OCI-LY7 (cell line): ENCODE measurements at regions of chr2 and their contacts with region 1.

Region 1: DNA sequence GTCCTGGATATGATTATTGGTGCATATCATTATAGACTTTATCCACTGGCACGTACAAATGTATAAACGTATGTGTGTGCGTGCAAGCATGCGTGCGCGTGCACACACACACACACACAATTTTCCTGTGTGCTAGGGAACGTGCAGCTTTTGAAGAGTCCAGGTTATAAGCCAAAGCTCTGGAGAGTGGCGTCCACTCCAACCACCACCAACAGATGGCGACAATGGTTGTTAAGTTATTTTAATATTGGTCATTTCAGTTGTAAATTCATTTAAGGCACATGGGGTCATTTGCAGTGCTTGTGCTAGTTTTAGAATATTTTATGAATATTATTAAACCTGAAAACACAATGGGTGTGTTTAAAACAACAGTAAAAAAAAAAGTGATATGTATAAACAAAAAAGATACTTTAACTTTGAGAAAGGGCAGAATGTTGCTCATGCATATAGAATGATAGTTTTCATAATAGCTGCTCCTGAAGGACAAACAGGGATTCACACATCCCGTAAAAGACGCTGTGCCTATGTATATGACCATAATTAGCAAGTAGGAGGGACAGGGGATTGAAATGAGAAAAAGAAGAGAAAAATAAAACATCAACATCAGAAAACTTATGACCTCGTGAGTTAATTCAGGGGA is 124.2 kb upstream of the ITGB6 start:
- DNase-seq: peak; percentile 49
- H3K4me3 ChIP-seq: no peak overlapping the region
- H3K27ac ChIP-seq: no peak overlapping the region
- H3K4me1 ChIP-seq: peaks cover 6% of the 10 kb centered on the region
- CTCF ChIP-seq: peak; percentile 88

Region 2: GRCh38 chr2:160429248-160430000 is 105.1 kb after region 1 on chr2:
- CTCF ChIA-PET with region 1: interaction called, 3 read pairs
- POLR2A ChIA-PET with region 1: interaction called, 7 read pairs
- intact Hi-C with region 1: loop called (anchors 5 kb)
- DNase-seq: peak; percentile 79
- H3K4me3 ChIP-seq: no peak overlapping the region
- H3K27ac ChIP-seq: peak overlapping the region; percentile 63
- H3K4me1 ChIP-seq: peaks cover 34% of the 10 kb centered on the region
- CTCF ChIP-seq: peak; percentile 92

Region 3: GRCh38 chr2:160918906-160919503 is 594.7 kb after region 1 on chr2:
- CTCF ChIA-PET with region 1: no interaction called
- POLR2A ChIA-PET with region 1: no interaction called
- intact Hi-C with region 1: loop called (anchors 5 kb)
- DNase-seq: peak; percentile 18
- H3K4me3 ChIP-seq: no peak overlapping the region
- H3K27ac ChIP-seq: no peak overlapping the region
- H3K4me1 ChIP-seq: no peaks in the 10 kb centered on the region
- CTCF ChIP-seq: peak; percentile 63

Region 4: GRCh38 chr2:160970052-160970965 is 646.0 kb after region 1 on chr2:
- CTCF ChIA-PET with region 1: no interaction called
- POLR2A ChIA-PET with region 1: interaction called, 3 read pairs
- intact Hi-C with region 1: loop called (anchors 5 kb)
- DNase-seq: peak; percentile 29
- H3K4me3 ChIP-seq: no peak overlapping the region
- H3K27ac ChIP-seq: no peak overlapping the region
- H3K4me1 ChIP-seq: no peaks in the 10 kb centered on the region
- CTCF ChIP-seq: peak; percentile 83

Region 5: GRCh38 chr2:160994141-160995002 is 670.1 kb after region 1 on chr2:
- CTCF ChIA-PET with region 1: no interaction called
- POLR2A ChIA-PET with region 1: no interaction called
- intact Hi-C with region 1: loop called (anchors 5 kb)
- DNase-seq: peak; percentile 64
- H3K4me3 ChIP-seq: no peak overlapping the region
- H3K27ac ChIP-seq: no peak overlapping the region
- H3K4me1 ChIP-seq: no peaks in the 10 kb centered on the region
- CTCF ChIP-seq: peak; percentile 95